Activated CD8-positive, alpha-beta T cell treated with anti-CD3 and anti-CD28 coated beads for 36 hours (primary cell): ENCODE measurements at regions of chr11 and their contacts with region 1.

Region 1: GRCh38 chr11:117621226-117621625 is 175.8 kb downstream of the DSCAML1 start:
- DNase-seq: peak; percentile 45
- ATAC-seq: no peak
- H3K4me3 Mint-ChIP-seq: no peak overlapping the region
- H3K27ac Mint-ChIP-seq: no peak overlapping the region
- H3K4me1 Mint-ChIP-seq: no peaks in the 10 kb centered on the region
- H3K27me3 Mint-ChIP-seq: peaks cover 1% of the 10 kb centered on the region
- CTCF ChIP-seq: peak; percentile 71

Region 2: GRCh38 chr11:117631336-117632140 is 10.3 kb after region 1 on chr11:
- CTCF ChIA-PET with region 1: interaction called, 12 read pairs
- POLR2A ChIA-PET with region 1: no interaction called
- intact Hi-C with region 1: no loop called
- DNase-seq: no peak
- ATAC-seq: no peak
- H3K4me3 Mint-ChIP-seq: no peak overlapping the region
- H3K27ac Mint-ChIP-seq: no peak overlapping the region
- H3K4me1 Mint-ChIP-seq: no peaks in the 10 kb centered on the region
- H3K27me3 Mint-ChIP-seq: no peaks in the 10 kb centered on the region
- CTCF ChIP-seq: no peak